Vagina (tissue), 2 donors: ENCODE measurements at regions of chr5 and their contacts with region 1.

Region 1: DNA sequence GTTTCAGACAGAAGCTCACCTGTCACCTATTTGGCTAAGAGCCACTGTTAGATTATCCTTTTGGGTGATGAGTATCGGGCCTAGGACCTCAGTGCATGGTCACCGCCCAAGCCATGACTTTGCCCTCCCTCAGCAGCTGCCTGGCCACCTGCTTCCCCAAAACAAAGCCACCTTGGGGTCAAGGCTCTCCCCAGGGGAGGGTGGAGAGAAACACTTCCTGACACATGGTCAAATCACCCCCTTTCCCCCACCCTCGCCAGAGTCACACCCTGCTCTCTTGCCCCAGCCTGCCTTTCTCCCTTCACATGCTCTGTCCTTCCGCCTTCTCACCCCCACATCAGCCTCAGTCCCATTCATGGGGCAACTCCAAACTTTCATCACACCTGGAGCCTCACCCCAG is 1.7 kb upstream of the HBEGF start:
- DNase-seq: no peak
- H3K4me3 ChIP-seq: no peak overlapping the region
- H3K27ac ChIP-seq: no peak overlapping the region
- H3K4me1 ChIP-seq: peaks cover 37% of the 10 kb centered on the region
- H3K27me3 ChIP-seq: no peaks in the 10 kb centered on the region
- CTCF ChIP-seq: no peak
- POLR2A ChIP-seq: no peak

Region 2: GRCh38 chr5:138772986-138773594 is 1575.0 kb before region 1 on chr5:
- intact Hi-C with region 1: no loop called
- DNase-seq: no peak
- H3K4me3 ChIP-seq: no peak overlapping the region
- H3K27ac ChIP-seq: no peak overlapping the region
- H3K4me1 ChIP-seq: peaks cover 56% of the 10 kb centered on the region
- H3K27me3 ChIP-seq: no peaks in the 10 kb centered on the region
- CTCF ChIP-seq: no peak
- POLR2A ChIP-seq: no peak

Region 3: DNA sequence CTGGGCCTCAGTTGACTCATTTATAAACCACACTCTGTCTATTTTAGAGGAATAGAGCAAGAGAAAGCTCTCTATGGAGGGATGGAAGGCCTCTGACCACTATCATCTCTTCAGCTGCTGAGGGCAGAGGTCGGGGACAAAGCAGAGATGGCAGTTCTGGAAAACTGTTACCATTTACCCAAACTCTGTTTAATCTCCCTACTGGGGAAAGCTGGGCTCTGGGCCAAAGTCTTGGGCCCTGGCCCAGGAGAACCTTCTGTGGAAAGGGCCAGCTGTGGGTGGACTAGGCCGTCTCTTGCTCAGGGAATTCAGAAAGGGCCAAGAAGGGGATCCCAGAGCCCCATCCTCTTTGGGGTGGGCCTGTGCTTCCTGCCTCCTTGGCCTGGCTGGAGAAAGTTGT is 452.5 kb before region 1 on chr5:
- intact Hi-C with region 1: no loop called
- DNase-seq: no peak
- H3K4me3 ChIP-seq: no peak overlapping the region
- H3K27ac ChIP-seq: no peak overlapping the region
- H3K4me1 ChIP-seq: peaks cover 28% of the 10 kb centered on the region
- H3K27me3 ChIP-seq: no peaks in the 10 kb centered on the region
- CTCF ChIP-seq: no peak
- POLR2A ChIP-seq: no peak

Region 4: DNA sequence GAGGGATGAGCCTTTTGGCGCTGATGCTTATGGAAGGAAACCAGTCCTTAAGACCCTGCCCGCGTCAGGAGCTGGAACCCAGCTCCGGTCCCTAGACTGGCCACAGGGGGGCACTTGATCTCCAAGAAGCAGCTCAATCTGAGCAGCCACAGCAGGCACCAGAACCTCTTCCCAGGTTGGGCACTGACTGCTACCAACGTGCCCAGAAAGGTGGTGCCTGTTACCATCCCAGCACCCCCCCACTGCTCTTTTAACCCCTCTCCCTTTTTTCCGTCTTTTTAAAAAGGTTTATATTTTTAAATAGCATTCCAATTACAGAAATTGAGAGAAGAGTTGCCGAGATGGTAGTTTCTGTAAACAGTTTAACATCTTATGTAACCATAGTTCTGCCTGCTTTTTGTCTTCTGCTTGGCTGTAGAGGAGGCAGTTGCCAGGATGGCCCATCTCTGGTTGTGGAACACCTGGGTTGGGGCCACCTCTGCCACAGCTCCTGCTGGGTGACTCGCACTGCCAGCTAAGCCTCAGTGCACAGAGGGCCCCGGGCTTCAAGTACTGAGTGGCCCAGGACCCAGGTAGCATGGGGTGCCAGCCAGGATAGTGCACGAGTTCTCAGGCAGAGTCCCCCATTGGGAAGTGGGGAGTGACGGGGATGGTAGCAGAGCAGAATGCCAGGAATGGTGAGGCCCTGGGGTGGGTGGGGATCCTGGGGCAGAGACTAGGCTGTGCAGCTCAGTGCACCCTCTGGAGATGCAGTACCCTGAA is 108.0 kb before region 1 on chr5:
- intact Hi-C with region 1: loop called (anchors 2 kb)
- DNase-seq: no peak
- H3K4me3 ChIP-seq: no peak overlapping the region
- H3K27ac ChIP-seq: peak overlapping the region; percentile 63
- H3K4me1 ChIP-seq: peaks cover 52% of the 10 kb centered on the region
- H3K27me3 ChIP-seq: no peaks in the 10 kb centered on the region
- CTCF ChIP-seq: peak; percentile 26 to 52 (median 40)
- POLR2A ChIP-seq: no peak